ENCODE measurements at regions of chr6 and their contacts with region 1.

Region 1: GRCh38 chr6:28988536-28989311 is 16.4 kb downstream of the ZNF311 start:
- DNase-seq: peak; percentile 68
- H3K4me3 Mint-ChIP-seq: peak overlapping the region; percentile 79
- H3K27ac Mint-ChIP-seq: no peak overlapping the region
- H3K4me1 Mint-ChIP-seq: peaks cover 18% of the 10 kb centered on the region
- H3K27me3 Mint-ChIP-seq: peaks cover 29% of the 10 kb centered on the region

Region 2: GRCh38 chr6:29005183-29005885 is 16.6 kb after region 1 on chr6 and contains the start of gene ZNF311:
- intact Hi-C with region 1: loop called (anchors 2 kb)
- DNase-seq: peak; percentile 45
- H3K4me3 Mint-ChIP-seq: peak within 1 kb of the TSS; percentile 80
- H3K27ac Mint-ChIP-seq: peak within 1 kb of the TSS; percentile 57
- H3K4me1 Mint-ChIP-seq: peaks cover 21% of the 10 kb centered on the region
- H3K27me3 Mint-ChIP-seq: peaks cover 6% of the 10 kb centered on the region
- total RNA-seq, gene ZNF311: 0.59 and 0.87 TPM in 2 replicates